ENCODE measurements at regions of chr19 and their contacts with region 1.

Region 1: GRCh38 chr19:2578901-2579677 is 103.2 kb downstream of the GADD45B start:
- DNase-seq: peak; percentile 76 to 91
- H3K4me3 ChIP-seq: peak overlapping the region; percentile 26 to 71 (median 58)
- H3K27ac ChIP-seq: no peak overlapping the region
- H3K4me1 ChIP-seq: peaks cover 4 to 17% (median 12%) of the 10 kb centered on the region in 4 experiments
- H3K27me3 ChIP-seq: no peaks in the 10 kb centered on the region; a peak in 1 of 7 replicates
- CTCF ChIP-seq: peak; percentile 88 to 96 (median 91)
- EP300 ChIP-seq: no peak
- POLR2A ChIP-seq: no peak
- RAD21 ChIP-seq: peak; percentile 88 to 91

Region 2: GRCh38 chr19:2469102-2469914 is 109.8 kb before region 1 on chr19:
- CTCF ChIA-PET with region 1: interaction called, 48 read pairs
- POLR2A ChIA-PET with region 1: no interaction called
- DNase-seq: no peak
- H3K4me3 ChIP-seq: no peak overlapping the region
- H3K27ac ChIP-seq: no peak overlapping the region
- H3K4me1 ChIP-seq: peaks cover 0 to 7% (median 0%) of the 10 kb centered on the region in 4 experiments; a peak in 2 of 7 replicates
- H3K27me3 ChIP-seq: no peaks in the 10 kb centered on the region
- CTCF ChIP-seq: no peak
- EP300 ChIP-seq: no peak
- POLR2A ChIP-seq: no peak
- RAD21 ChIP-seq: no peak

Region 3: GRCh38 chr19:2552859-2553258 is 26.2 kb before region 1 on chr19:
- CTCF ChIA-PET with region 1: interaction called, 13 read pairs
- POLR2A ChIA-PET with region 1: interaction called, 4 read pairs
- DNase-seq: no peak
- H3K4me3 ChIP-seq: no peak overlapping the region
- H3K27ac ChIP-seq: no peak overlapping the region
- H3K4me1 ChIP-seq: peaks cover 0 to 10% (median 0%) of the 10 kb centered on the region in 4 experiments; a peak in 1 of 7 replicates
- H3K27me3 ChIP-seq: no peaks in the 10 kb centered on the region
- CTCF ChIP-seq: no peak
- EP300 ChIP-seq: no peak
- POLR2A ChIP-seq: no peak
- RAD21 ChIP-seq: no peak

Region 4: DNA sequence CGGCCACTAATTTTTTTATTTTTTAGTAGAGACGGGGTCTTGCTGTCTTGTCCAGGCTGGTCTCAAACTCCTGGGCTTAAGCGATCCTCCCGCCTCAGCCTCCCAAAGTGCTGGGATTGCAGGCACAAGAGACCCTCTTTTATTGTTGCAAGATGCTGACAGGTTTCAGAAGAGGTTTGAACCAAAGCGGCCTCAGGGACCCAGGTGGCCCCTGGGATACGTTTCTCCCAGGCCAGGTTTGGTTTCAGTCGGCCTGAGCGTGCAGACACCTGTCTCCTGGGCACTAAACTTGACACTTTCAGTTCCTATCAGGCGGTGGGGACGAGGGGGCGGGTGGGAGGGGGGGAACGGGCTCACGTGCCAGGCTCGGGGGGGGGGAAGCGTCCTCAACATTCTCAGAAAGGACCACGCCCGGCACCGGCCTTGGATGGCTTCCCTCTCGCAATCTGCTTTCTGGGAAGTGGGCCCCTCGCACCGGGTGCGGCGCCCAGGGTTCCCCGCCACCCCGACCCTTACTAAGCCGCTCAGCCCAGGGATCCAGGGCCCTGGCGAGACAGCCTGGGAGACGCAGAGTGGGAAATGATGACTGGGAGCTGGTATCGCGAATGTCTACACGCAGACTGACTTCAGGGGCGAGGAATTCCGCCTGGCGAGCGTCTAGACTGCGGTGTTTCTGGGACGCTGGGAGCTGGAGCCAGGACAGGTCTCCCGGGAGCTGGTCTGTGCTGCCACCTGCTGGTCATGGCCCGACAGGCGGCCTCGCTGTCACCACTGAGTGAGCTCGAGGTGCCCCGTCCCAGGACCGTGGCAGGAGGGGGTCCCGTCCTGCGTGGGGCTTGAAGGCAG is 31.8 kb after region 1 on chr19:
- CTCF ChIA-PET with region 1: interaction called, 19 read pairs
- POLR2A ChIA-PET with region 1: interaction called, 4 read pairs
- DNase-seq: peak; percentile 80 to 98
- H3K4me3 ChIP-seq: peak overlapping the region in 3 of 4 experiments; percentile 32 to 55 (median 37); a peak in 6 of 8 replicates
- H3K27ac ChIP-seq: no peak overlapping the region
- H3K4me1 ChIP-seq: peaks cover 0 to 5% (median under 1%) of the 10 kb centered on the region in 4 experiments; a peak in 2 of 7 replicates
- H3K27me3 ChIP-seq: peaks cover 0 to 9% (median 2%) of the 10 kb centered on the region in 4 experiments; a peak in 1 of 7 replicates
- CTCF ChIP-seq: peak; percentile 90 to 98 (median 96)
- EP300 ChIP-seq: 0 out of 3 replicates have a peak, but pooled peaks of 1 of the 2 experiments have one; percentile 10
- POLR2A ChIP-seq: no peak
- RAD21 ChIP-seq: peak; percentile 98 to 99

Region 5: GRCh38 chr19:2678043-2678671 is 99.1 kb after region 1 on chr19:
- CTCF ChIA-PET with region 1: no interaction called
- POLR2A ChIA-PET with region 1: no interaction called
- DNase-seq: no peak
- H3K4me3 ChIP-seq: no peak overlapping the region
- H3K27ac ChIP-seq: no peak overlapping the region
- H3K4me1 ChIP-seq: peaks cover 5 to 10% (median 5%) of the 10 kb centered on the region in 4 experiments
- H3K27me3 ChIP-seq: no peaks in the 10 kb centered on the region; a peak in 2 of 7 replicates
- CTCF ChIP-seq: no peak
- EP300 ChIP-seq: no peak
- POLR2A ChIP-seq: no peak
- RAD21 ChIP-seq: no peak

Measured in H1 (cell line).